MCF 10A (cell line): ENCODE measurements at regions of chr16 and their contacts with region 1.

Region 1: DNA sequence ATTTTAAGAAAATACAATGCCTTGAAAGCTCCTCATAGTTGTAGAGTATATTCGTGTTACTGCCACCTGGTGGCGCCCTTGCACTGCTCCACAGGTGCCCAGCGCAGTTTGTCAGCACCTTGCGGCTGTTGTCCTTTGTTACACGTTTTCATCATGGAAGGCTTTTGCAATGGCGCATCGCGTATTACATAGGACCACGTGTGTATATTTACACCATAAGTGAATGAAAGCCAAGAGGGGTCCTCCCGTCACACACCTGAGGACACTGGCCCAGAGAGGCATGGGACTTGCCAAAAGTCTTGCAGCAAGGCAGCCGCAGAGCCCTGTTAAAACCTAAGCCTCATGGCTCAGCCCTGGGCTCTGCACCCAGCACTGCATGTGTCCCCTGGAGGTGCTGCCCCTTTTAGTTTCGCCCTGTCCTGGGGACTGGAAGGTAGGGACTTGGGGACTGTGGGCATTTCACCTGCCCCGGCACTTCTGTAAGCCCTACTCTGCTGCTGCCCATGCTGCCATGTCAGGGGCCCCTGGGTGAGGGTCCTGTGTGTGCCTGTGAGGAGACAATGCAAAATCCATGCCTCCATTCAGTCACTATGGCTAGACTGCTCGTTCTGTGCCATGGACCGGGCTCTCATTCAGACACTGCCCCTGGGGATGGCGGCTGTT is 24.3 kb downstream of the POLR3E start:
- DNase-seq: peak; percentile 73
- H3K4me3 Mint-ChIP-seq: no peak overlapping the region
- H3K27ac Mint-ChIP-seq: no peak overlapping the region
- H3K4me1 Mint-ChIP-seq: no peaks in the 10 kb centered on the region
- H3K27me3 Mint-ChIP-seq: no peaks in the 10 kb centered on the region
- CTCF ChIP-seq: peak; percentile 91

Region 2: DNA sequence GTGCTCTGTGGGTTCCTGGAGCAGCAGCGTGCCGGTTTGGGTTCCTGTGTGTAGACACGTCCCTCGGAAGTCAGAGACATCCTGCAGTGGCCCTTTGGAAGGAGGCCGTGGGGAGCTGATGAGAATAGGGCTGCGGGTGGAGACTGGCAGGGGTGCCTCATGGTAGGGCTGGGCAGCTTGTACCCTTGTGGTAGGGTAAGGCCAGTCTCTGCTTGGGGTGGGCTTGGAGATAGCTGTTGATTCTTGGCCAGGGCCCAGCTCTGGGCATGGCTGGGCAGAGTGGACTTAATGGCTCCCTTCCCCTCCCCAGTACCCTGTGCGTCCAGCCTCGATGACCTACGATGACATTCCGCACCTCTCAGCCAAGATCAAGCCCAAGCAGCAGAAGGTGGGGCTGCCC is 13.6 kb before region 1 on chr16:
- CTCF ChIA-PET with region 1: interaction called, 37 read pairs
- POLR2A ChIA-PET with region 1: interaction called, 3 read pairs
- intact Hi-C with region 1: no loop called
- DNase-seq: no peak
- H3K4me3 Mint-ChIP-seq: no peak overlapping the region
- H3K27ac Mint-ChIP-seq: no peak overlapping the region
- H3K4me1 Mint-ChIP-seq: no peaks in the 10 kb centered on the region
- H3K27me3 Mint-ChIP-seq: no peaks in the 10 kb centered on the region
- CTCF ChIP-seq: no peak

Region 3: DNA sequence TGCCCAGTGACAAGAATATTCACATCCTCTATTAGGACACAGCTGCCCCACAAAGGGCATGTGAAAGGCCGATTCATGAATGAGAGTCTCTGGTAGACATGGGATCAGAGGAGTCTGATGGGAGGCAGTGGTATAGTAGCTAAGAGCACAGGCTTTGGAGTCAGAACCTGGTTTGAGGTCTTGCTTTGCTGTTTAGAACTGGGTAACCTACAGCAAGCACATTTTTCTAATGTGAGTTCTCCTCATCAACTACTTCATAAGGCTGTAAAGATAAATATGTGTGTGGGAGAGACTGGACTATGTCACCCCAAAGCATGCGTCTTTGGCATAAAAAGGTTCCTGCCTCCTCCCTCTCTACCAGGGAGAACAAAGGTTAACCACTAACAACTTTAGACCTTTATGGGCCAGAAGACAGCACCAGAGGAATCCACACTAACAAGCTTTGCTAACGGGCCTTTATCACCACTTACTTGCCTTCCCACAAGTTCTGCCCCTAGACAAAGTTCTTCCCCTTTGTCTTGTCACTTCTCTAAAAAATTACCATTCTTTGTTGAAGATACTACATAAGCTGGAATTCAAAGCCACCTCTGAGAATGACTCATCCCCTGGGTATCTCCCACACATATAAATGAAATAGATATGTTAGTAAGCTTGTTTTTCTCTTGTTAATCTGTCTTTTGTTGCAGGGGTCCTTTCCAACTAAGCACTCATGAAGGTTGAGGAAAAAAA is 31.9 kb after region 1 on chr16:
- CTCF ChIA-PET with region 1: interaction called, 13 read pairs
- POLR2A ChIA-PET with region 1: interaction called, 3 read pairs
- intact Hi-C with region 1: no loop called
- DNase-seq: peak; percentile 44
- H3K4me3 Mint-ChIP-seq: no peak overlapping the region
- H3K27ac Mint-ChIP-seq: no peak overlapping the region
- H3K4me1 Mint-ChIP-seq: peaks cover 31% of the 10 kb centered on the region
- H3K27me3 Mint-ChIP-seq: no peaks in the 10 kb centered on the region
- CTCF ChIP-seq: no peak